CD8-positive, alpha-beta T cell (primary cell): ENCODE measurements at regions of chr6 and their contacts with region 1.

Region 1: DNA sequence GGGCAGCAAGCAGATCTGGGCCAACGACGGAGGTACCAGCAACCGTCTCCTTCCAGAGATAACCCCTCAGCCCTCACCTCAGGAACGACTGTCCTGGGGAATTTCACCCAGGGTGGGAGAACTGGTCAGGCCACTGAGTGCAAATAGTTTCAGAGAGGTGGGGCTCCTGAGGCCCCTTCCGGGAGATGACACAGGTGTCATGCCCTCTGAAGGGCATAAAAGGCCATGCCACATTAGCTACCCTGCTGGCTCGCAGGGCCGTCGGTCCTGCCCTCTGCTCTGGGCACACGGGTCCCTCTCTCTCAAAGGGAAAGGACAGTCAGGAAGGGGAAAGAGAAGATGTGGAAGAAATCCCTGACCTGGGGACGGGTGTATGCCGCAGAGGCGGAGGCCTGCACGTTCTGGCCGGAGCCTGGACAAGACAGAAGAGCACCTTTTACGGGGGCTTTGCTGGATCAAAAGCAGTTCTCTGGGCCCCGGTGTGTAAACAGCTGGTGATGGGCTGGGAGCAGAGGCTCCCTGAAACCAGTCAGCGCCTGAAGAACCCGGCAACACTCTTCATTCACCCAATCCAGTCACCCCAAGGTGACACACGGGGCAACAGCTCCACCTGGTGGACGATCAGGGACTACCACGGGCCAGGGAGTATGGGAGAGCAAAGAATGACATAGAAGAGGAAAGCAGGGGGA is 6.4 kb upstream of the TAF8 start:
- DNase-seq: peak; percentile 82 to 97 (median 91)
- ATAC-seq: peak; percentile 30
- H3K4me3 ChIP-seq: peak overlapping the region; percentile 42 to 57
- H3K4me3 Mint-ChIP-seq: peak overlapping the region; percentile 81
- H3K27ac ChIP-seq: peak overlapping the region; percentile 41 to 55
- H3K27ac Mint-ChIP-seq: peak overlapping the region; percentile 95
- H3K4me1 ChIP-seq: peaks cover 65% of the 10 kb centered on the region
- H3K4me1 Mint-ChIP-seq: peaks cover 78% of the 10 kb centered on the region
- H3K27me3 ChIP-seq: no peaks in the 10 kb centered on the region
- H3K27me3 Mint-ChIP-seq: no peaks in the 10 kb centered on the region
- CTCF ChIP-seq: peak; percentile 84

Region 2: DNA sequence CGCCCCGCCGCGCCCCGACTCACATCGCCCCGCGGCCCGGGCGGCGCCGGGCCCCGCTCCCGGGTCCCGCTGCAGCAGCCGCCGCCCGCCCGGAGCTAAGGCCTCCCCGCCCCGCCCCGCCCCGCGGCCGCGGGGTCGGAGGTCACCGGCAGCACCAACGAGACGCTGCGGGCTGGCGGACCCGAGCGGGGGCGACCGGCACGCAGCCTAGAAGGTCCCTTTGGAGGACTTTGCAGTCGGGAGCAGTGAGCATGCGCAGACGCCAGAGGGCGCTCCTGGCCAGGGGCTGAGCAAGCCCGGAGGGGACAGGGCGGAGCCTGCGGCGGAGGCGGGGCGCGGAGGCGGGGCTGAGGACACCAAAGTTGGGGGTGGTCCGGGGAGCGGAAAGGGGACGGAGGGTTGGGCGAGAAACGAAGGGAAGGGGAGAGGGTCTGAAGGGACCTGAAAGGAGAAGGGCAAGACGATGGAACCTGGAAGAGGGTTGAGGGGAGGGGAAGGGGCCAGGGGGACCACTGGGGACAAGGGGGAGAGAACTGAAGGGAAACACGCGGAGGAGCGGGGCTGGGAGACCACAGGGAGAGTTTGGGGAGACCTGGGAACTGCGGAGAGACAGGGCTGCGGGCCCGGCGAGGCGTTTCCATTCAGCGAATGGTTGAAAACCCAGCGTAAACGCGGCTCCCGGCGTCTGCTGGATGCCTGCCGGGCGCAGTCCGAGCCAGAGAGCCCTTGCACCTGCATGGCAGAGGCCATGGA is 264.0 kb before region 1 on chr6 and contains the start of gene FRS3:
- CTCF ChIA-PET with region 1: interaction called, 153 read pairs
- POLR2A ChIA-PET with region 1: interaction called, 3 read pairs
- intact Hi-C with region 1: loop called (anchors 1 kb)
- DNase-seq: peak; percentile 96 to 100 (median 99)
- ATAC-seq: peak; percentile 97
- H3K4me3 ChIP-seq: peak within 1 kb of the TSS; percentile 73 to 93
- H3K4me3 Mint-ChIP-seq: peak within 1 kb of the TSS; percentile 93
- H3K27ac ChIP-seq: peak within 1 kb of the TSS in 1 of 2 experiments; percentile 23
- H3K27ac Mint-ChIP-seq: no peak within 1 kb of the TSS
- H3K4me1 ChIP-seq: peaks cover 18% of the 10 kb centered on the region
- H3K4me1 Mint-ChIP-seq: peaks cover 21% of the 10 kb centered on the region
- H3K27me3 ChIP-seq: no peaks in the 10 kb centered on the region
- H3K27me3 Mint-ChIP-seq: peaks cover 4% of the 10 kb centered on the region
- CTCF ChIP-seq: peak; percentile 74
- total RNA-seq, gene FRS3: 3.7 to 6.2 TPM

Region 3: GRCh38 chr6:41895300-41896233 is 148.4 kb before region 1 on chr6 and contains the start of gene USP49:
- CTCF ChIA-PET with region 1: interaction called, 135 read pairs
- POLR2A ChIA-PET with region 1: interaction called, 5 read pairs
- intact Hi-C with region 1: loop called (anchors 1 to 2 kb)
- DNase-seq: peak; percentile 80 to 94 (median 91)
- ATAC-seq: peak; percentile 95
- H3K4me3 ChIP-seq: peak within 1 kb of the TSS; percentile 78 to 90
- H3K4me3 Mint-ChIP-seq: no peak within 1 kb of the TSS
- H3K27ac ChIP-seq: peak within 1 kb of the TSS; percentile 55 to 77
- H3K27ac Mint-ChIP-seq: peak within 1 kb of the TSS; percentile 89
- H3K4me1 ChIP-seq: peaks cover 24% of the 10 kb centered on the region
- H3K4me1 Mint-ChIP-seq: peaks cover 10% of the 10 kb centered on the region
- H3K27me3 ChIP-seq: no peaks in the 10 kb centered on the region
- H3K27me3 Mint-ChIP-seq: no peaks in the 10 kb centered on the region
- CTCF ChIP-seq: no peak
- total RNA-seq, gene USP49: 1.6 to 1.8 TPM

Region 4: GRCh38 chr6:41929924-41930323 is 114.0 kb before region 1 on chr6:
- CTCF ChIA-PET with region 1: interaction called, 184 read pairs
- POLR2A ChIA-PET with region 1: interaction called, 58 read pairs
- intact Hi-C with region 1: no loop called
- DNase-seq: no peak
- ATAC-seq: no peak
- H3K4me3 ChIP-seq: no peak overlapping the region
- H3K4me3 Mint-ChIP-seq: no peak overlapping the region
- H3K27ac ChIP-seq: peak overlapping the region in 1 of 2 experiments; percentile 4
- H3K27ac Mint-ChIP-seq: no peak overlapping the region
- H3K4me1 ChIP-seq: peaks cover 7% of the 10 kb centered on the region
- H3K4me1 Mint-ChIP-seq: peaks cover 36% of the 10 kb centered on the region
- H3K27me3 ChIP-seq: no peaks in the 10 kb centered on the region
- H3K27me3 Mint-ChIP-seq: no peaks in the 10 kb centered on the region
- CTCF ChIP-seq: no peak

Region 5: DNA sequence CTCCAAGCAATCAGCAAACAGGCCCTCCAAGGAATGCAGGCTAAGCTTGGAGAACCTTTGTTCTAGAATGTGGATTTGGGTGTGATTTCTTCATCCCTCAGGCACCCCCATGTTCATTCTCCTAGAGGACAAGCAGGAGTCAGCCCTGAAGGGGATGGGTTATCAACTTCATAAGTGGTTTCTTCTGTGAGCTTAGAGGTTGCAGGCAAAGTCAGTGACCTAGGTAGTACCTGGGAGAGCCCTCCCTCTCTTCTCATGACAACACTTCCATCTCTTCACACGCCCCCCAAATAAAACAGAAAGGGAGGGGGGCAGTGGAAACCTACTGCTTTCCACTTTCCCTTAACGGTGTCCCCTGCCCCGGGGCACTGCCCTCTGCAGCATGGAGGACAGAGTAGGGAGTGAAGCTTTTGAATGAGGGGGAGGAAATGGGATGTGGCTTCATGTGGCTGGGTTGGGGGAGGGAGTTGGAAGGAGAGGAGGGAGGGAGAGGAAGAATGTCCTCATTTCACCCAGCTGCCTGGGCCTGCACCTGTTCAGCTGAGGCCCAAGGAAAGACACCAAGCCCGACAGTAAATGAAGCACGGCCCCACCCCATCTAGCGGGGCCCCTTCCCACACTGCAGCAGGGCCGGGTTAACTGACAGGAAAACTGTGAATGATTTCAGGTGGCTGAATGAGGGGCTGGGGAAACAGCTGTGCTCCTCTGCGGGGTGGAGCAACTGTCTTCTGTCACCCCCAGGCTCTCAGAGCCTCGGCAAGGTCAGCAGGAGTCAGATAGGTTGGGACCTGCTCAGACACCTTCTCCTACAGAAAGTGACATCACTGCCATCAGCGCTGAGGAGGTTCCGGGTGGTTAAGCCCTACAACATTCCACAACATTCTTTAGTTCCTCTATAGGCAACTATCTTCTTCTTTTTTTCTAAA is 33.7 kb before region 1 on chr6:
- CTCF ChIA-PET with region 1: interaction called, 27 read pairs
- POLR2A ChIA-PET with region 1: interaction called, 4 read pairs
- intact Hi-C with region 1: loop called (anchors 5 kb)
- DNase-seq: peak in 2 of 9 experiments; percentile 19 to 42
- ATAC-seq: peak; percentile 71
- H3K4me3 ChIP-seq: no peak overlapping the region
- H3K4me3 Mint-ChIP-seq: peak overlapping the region; percentile 61
- H3K27ac ChIP-seq: peak overlapping the region; percentile 24 to 65
- H3K27ac Mint-ChIP-seq: peak overlapping the region; percentile 97
- H3K4me1 ChIP-seq: peaks cover 79% of the 10 kb centered on the region
- H3K4me1 Mint-ChIP-seq: peaks cover 79% of the 10 kb centered on the region
- H3K27me3 ChIP-seq: no peaks in the 10 kb centered on the region
- H3K27me3 Mint-ChIP-seq: no peaks in the 10 kb centered on the region
- CTCF ChIP-seq: no peak

Region 6: GRCh38 chr6:42104095-42104806 is 60.3 kb after region 1 on chr6:
- CTCF ChIA-PET with region 1: interaction called, 20 read pairs
- POLR2A ChIA-PET with region 1: interaction called, 12 read pairs
- intact Hi-C with region 1: loop called in 1 of 2 experiments (anchors 1 kb)
- DNase-seq: peak; percentile 38 to 86 (median 72)
- ATAC-seq: peak; percentile 89
- H3K4me3 ChIP-seq: peak overlapping the region; percentile 45 to 69
- H3K4me3 Mint-ChIP-seq: peak overlapping the region; percentile 72
- H3K27ac ChIP-seq: peak overlapping the region; percentile 11 to 38
- H3K27ac Mint-ChIP-seq: peak overlapping the region; percentile 62
- H3K4me1 ChIP-seq: peaks cover 8% of the 10 kb centered on the region
- H3K4me1 Mint-ChIP-seq: peaks cover 7% of the 10 kb centered on the region
- H3K27me3 ChIP-seq: no peaks in the 10 kb centered on the region
- H3K27me3 Mint-ChIP-seq: no peaks in the 10 kb centered on the region
- CTCF ChIP-seq: peak; percentile 98